Activated T-helper 1 cell treated with anti-CD3 and anti-CD28 coated beads, Interleukin-12 subunit alpha, Interleukin-12 subunit beta, Interleukin-2, Interleukin-4 antibody, amounts not matched to agents 30 ng/mL and 10 ng/mL and 1 ng/mL, durations not matched to agents 14 hours and 24 hours and 36 hours (primary cell): ENCODE measurements at regions of chr9 and their contacts with region 1.

Region 1: GRCh38 chr9:124940693-124941453 is at the start of gene GOLGA1:
- DNase-seq: peak; percentile 92
- H3K4me3 Mint-ChIP-seq: peak within 1 kb of the TSS; percentile 94
- H3K27ac Mint-ChIP-seq: peak within 1 kb of the TSS; percentile 99
- H3K4me1 Mint-ChIP-seq: peaks cover 29% of the 10 kb centered on the region
- H3K27me3 Mint-ChIP-seq: no peaks in the 10 kb centered on the region
- total RNA-seq, gene GOLGA1: 16.6 TPM in 2 replicates

Region 2: DNA sequence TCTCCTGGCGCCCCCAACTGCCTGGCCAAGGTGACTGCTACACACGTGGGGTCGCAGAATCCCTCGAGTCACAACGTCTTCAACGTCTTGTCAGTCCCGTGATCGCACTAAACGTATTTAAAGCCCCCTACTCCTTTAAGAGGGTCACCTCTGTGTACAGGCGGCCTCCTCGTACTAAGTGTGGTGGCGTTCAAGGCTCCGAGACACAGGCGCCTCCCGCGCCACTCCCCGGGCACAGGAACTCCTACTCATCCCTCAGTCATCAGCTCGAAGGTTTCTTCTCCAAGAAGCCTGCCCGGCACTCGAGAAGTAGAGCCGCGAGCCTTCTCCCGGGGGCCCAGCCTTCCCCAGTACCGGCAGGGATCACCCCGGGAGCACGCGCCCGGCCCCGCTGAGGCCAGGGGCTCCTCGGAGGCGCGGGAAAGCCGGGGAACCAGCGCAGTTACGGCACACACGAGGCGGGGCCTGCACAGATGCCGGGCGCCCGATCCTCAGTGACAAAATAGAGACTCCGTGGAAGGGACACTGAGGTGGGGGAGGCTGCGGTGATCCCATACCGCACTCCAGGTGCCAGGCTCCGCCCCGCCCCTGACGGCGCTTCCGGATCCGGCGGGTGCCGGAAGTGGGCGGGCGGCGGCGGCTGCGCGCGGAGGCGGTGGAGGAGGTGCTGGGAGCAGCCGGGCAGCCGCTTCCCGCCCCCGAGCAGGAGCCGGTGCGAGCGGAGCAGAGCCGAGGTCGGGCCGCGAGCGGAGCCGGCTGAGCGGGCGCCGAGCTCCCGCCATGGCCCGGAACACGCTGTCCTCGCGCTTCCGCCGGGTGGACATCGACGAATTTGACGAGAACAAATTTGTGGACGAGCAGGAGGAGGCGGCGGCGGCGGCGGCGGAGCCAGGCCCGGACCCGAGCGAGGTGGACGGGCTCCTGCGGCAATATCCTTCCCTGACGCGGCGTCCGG is 72.1 kb before region 1 on chr9:
- intact Hi-C with region 1: loop called (anchors 1 kb)
- DNase-seq: peak; percentile 93
- H3K4me3 Mint-ChIP-seq: peak overlapping the region; percentile 99
- H3K27ac Mint-ChIP-seq: peak overlapping the region; percentile 100
- H3K4me1 Mint-ChIP-seq: peaks cover 56% of the 10 kb centered on the region
- H3K27me3 Mint-ChIP-seq: peaks cover 1% of the 10 kb centered on the region

Region 3: GRCh38 chr9:124960409-124960752 is 19.5 kb after region 1 on chr9:
- intact Hi-C with region 1: no loop called
- DNase-seq: no peak
- H3K4me3 Mint-ChIP-seq: no peak overlapping the region
- H3K27ac Mint-ChIP-seq: no peak overlapping the region
- H3K4me1 Mint-ChIP-seq: peaks cover 12% of the 10 kb centered on the region
- H3K27me3 Mint-ChIP-seq: no peaks in the 10 kb centered on the region

Region 4: DNA sequence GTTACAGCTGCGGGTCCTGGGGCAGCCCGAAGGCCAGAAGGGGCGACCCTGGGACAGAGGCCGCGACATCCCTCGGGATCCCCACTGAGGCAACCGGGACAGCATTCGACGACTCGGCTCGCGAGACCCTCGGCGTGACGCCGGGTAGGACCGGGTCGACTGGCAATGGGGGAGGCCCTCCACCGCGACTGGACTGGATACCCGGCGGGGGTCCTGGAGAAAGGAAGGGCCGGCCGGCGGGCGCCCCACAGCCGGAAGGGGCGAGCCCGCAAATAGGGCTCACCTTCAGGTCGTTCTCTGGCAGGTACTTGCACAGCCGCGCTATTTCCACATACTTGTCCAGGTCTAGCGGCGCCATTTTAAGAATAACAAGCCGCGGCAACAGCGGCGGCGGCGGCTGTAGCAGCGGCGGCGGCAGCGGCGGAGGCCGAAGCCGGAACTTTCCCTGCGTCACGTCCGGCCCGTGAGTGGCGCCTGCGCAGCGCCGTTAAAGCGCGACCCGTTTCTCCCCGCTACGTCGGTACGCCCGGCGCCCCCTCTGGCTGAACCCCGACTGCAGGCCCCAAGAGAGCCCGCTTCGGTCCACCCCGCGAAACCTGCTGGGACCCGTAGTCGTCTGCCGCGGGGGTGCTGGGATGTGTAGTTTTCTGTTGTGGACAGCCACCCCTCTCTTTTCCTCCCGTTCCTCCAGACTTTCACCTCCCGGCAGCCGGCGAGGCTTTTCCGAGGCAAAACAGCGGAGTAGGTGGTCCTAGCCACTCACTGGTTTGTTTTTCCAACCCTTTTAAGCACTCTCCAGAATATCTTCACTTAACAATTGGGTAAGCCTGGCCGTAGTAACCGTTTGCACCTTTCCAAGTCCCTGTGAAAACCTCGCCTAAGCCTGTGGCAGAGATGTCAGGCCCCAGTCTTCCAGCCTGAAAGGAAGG is 248.8 kb after region 1 on chr9 and contains the start of gene PPP6C:
- intact Hi-C with region 1: loop called (anchors 1 kb)
- DNase-seq: peak; percentile 96
- H3K4me3 Mint-ChIP-seq: peak within 1 kb of the TSS; percentile 96
- H3K27ac Mint-ChIP-seq: peak within 1 kb of the TSS; percentile 88
- H3K4me1 Mint-ChIP-seq: peaks cover 33% of the 10 kb centered on the region
- H3K27me3 Mint-ChIP-seq: no peaks in the 10 kb centered on the region
- total RNA-seq, gene PPP6C: 47.2 and 50.8 TPM in 2 replicates

Region 5: DNA sequence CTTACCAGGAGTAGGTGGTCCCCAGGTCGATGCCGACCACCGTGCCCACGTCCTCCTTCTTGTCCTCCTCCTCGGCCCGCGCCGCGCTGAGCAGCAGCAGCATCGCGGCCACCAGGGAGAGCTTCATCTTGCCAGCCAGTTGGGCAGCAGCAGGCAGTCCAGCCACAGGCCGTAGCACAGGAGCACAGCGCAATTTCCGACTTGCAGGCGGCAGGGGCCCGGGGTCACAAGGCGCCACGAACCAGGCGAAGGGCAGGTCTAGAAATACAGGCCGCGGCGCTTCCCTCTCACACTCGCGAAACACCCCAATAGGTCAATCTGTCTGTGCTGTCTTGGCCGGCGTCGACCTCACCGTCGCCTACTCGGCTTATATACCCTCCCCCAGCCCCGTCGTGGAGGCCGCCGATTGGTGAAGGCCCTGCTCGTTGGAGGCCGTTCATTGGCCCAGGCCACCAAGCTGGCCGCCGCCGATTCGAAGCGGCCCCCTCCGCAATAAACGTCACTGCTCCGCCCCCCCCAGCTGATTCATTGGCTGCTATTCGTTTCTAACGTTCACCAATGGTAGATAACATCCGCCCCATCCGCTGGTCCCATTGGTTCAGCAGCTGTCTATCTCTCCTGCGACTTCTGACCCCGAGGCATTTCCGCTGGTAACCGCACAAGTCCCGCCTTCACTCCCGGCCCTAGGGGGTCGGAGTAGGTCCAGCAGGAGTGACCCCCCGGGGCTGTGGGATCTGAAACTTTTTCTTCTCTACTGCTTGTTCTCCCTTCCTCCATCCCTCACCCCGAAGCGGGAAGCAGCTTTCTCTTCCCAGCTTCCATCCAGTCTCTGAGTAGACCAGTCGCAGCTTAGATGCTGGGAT is 300.4 kb after region 1 on chr9 and contains the start of gene HSPA5:
- intact Hi-C with region 1: loop called (anchors 2 kb)
- DNase-seq: peak; percentile 99
- H3K4me3 Mint-ChIP-seq: peak within 1 kb of the TSS; percentile 96
- H3K27ac Mint-ChIP-seq: peak within 1 kb of the TSS; percentile 96
- H3K4me1 Mint-ChIP-seq: peaks cover 36% of the 10 kb centered on the region
- H3K27me3 Mint-ChIP-seq: no peaks in the 10 kb centered on the region
- total RNA-seq, gene HSPA5: 242 and 243 TPM in 2 replicates